Activated CD4-positive, alpha-beta memory T cell treated with anti-CD3 and anti-CD28 coated beads for 36 hours (primary cell): ENCODE measurements at regions of chr15 and their contacts with region 1.

Region 1: DNA sequence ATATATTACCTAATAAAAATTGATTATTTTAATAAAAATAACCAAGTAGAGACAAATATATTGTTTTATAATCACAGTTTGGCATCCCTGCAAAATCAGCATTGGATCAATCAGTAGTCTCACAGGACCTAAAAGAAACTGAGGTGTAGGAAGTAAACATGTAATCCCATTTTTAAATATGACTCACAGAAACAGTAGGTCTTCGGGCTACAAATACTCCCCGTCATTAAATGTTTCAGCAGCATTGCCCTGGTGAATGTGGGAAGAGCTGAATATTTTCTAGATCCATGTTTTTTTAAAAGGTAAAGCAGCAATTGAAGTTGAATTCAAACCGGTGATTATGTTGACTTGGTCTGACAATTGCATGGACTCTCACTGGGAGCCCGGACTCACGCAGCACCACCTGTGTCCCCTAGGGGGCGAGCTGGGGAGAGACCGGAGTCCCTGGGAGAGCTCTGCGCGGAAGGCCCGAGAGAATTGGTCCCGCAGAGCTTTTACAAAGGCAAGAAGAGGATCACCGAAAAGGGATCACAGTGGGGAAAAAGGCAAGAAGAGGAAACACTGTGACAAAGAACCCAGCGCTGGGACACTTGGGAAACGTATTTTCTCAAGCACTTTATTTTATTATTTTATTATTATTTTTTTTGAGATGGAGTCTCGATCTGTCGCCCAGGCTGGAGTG is 17.2 kb upstream of the USP3 start:
- DNase-seq: peak; percentile 93
- H3K4me3 Mint-ChIP-seq: peak overlapping the region; percentile 56
- H3K27ac Mint-ChIP-seq: peak overlapping the region; percentile 49
- H3K4me1 Mint-ChIP-seq: peaks cover 62% of the 10 kb centered on the region
- H3K27me3 Mint-ChIP-seq: no peaks in the 10 kb centered on the region

Region 2: DNA sequence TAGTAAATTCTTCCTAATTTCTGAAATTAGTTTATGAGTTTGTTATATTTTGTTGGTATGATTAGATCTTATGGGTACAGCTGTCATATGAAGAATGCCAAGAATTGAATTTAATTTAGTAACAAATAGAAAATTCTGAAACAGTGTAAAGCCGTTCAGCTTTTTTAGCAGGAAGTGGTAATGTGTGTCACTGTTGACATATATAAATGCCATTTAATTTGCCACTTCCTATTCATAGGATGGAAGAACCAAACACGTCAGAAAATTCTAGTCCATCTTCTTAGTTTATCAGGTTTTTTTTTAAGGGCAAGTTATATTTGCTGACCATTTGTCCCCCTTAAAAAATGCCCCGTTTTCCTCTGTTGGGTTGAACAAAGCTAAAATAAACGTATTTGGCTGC is 254.8 kb before region 1 on chr15:
- CTCF ChIA-PET with region 1: no interaction called
- POLR2A ChIA-PET with region 1: no interaction called
- intact Hi-C with region 1: no loop called
- DNase-seq: no peak
- H3K4me3 Mint-ChIP-seq: no peak overlapping the region
- H3K27ac Mint-ChIP-seq: peak overlapping the region; percentile 79
- H3K4me1 Mint-ChIP-seq: peaks cover 75% of the 10 kb centered on the region
- H3K27me3 Mint-ChIP-seq: no peaks in the 10 kb centered on the region

Region 3: DNA sequence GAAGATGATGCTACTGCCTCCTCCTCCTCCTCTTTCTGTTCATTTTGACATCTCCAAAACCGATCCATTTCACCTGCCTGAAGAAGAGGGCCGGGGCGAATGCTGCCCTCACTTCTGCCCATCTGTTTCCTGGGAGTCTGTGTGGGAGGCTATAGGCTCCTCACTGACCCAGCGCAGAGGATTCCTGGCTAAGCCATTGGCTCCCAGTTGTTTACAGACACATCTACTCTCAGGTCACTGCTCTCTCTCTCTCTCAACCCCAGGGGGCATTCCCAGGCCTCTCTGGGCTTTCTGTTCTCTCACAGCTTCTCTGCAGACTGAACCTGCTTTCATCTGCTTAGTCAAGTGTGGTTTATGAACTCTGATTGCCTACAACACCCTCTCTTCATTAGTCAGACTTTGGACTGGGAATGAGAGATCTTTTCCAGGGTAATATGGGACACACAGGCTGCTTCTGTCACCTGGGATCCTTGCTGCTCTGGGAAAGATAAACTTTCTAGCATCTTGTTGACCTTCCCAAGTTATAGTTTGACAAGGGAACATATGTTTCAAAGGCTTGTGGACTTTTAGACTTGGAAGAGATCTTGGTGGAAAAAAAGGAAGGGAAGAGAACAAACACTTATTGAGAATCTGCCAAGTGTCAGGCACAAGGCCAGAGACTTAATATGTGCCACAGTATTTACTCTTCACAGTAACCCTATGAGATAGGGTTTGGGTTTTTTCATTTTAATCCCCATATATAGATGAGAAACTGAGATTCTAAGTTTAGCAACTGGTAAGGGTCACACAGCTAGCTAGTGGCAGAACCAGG is 13.0 kb before region 1 on chr15:
- CTCF ChIA-PET with region 1: interaction called, 12 read pairs
- POLR2A ChIA-PET with region 1: interaction called, 3 read pairs
- intact Hi-C with region 1: no loop called
- DNase-seq: peak; percentile 84
- H3K4me3 Mint-ChIP-seq: peak overlapping the region; percentile 43
- H3K27ac Mint-ChIP-seq: peak overlapping the region; percentile 72
- H3K4me1 Mint-ChIP-seq: peaks cover 55% of the 10 kb centered on the region
- H3K27me3 Mint-ChIP-seq: no peaks in the 10 kb centered on the region

Region 4: GRCh38 chr15:63497642-63498467 is 10.6 kb after region 1 on chr15:
- CTCF ChIA-PET with region 1: interaction called, 76 read pairs
- POLR2A ChIA-PET with region 1: interaction called, 42 read pairs
- intact Hi-C with region 1: loop called (anchors 1 kb)
- DNase-seq: peak; percentile 77
- H3K4me3 Mint-ChIP-seq: no peak overlapping the region
- H3K27ac Mint-ChIP-seq: no peak overlapping the region
- H3K4me1 Mint-ChIP-seq: peaks cover 80% of the 10 kb centered on the region
- H3K27me3 Mint-ChIP-seq: no peaks in the 10 kb centered on the region

Region 5: GRCh38 chr15:63514531-63514943 is 27.3 kb after region 1 on chr15:
- CTCF ChIA-PET with region 1: interaction called, 14 read pairs
- POLR2A ChIA-PET with region 1: interaction called, 7 read pairs
- intact Hi-C with region 1: no loop called
- DNase-seq: no peak
- H3K4me3 Mint-ChIP-seq: peak overlapping the region; percentile 6
- H3K27ac Mint-ChIP-seq: peak overlapping the region; percentile 72
- H3K4me1 Mint-ChIP-seq: peaks cover 87% of the 10 kb centered on the region
- H3K27me3 Mint-ChIP-seq: no peaks in the 10 kb centered on the region

Region 6: GRCh38 chr15:63539521-63539920 is 52.3 kb after region 1 on chr15:
- CTCF ChIA-PET with region 1: interaction called, 11 read pairs
- POLR2A ChIA-PET with region 1: no interaction called
- intact Hi-C with region 1: no loop called
- DNase-seq: no peak
- H3K4me3 Mint-ChIP-seq: no peak overlapping the region
- H3K27ac Mint-ChIP-seq: no peak overlapping the region
- H3K4me1 Mint-ChIP-seq: peaks cover 56% of the 10 kb centered on the region
- H3K27me3 Mint-ChIP-seq: no peaks in the 10 kb centered on the region

Region 7: GRCh38 chr15:63553388-63553791 is 66.2 kb after region 1 on chr15:
- CTCF ChIA-PET with region 1: interaction called, 13 read pairs
- POLR2A ChIA-PET with region 1: no interaction called
- intact Hi-C with region 1: no loop called
- DNase-seq: no peak
- H3K4me3 Mint-ChIP-seq: no peak overlapping the region
- H3K27ac Mint-ChIP-seq: peak overlapping the region; percentile 28
- H3K4me1 Mint-ChIP-seq: peaks cover 57% of the 10 kb centered on the region
- H3K27me3 Mint-ChIP-seq: no peaks in the 10 kb centered on the region

Region 8: GRCh38 chr15:63600616-63601025 is 113.4 kb after region 1 on chr15:
- CTCF ChIA-PET with region 1: interaction called, 21 read pairs
- POLR2A ChIA-PET with region 1: interaction called, 3 read pairs
- intact Hi-C with region 1: no loop called
- DNase-seq: peak; percentile 93
- H3K4me3 Mint-ChIP-seq: peak overlapping the region; percentile 93
- H3K27ac Mint-ChIP-seq: peak overlapping the region; percentile 96
- H3K4me1 Mint-ChIP-seq: peaks cover 54% of the 10 kb centered on the region
- H3K27me3 Mint-ChIP-seq: no peaks in the 10 kb centered on the region

Region 9: GRCh38 chr15:63626955-63627354 is 139.7 kb after region 1 on chr15:
- CTCF ChIA-PET with region 1: no interaction called
- POLR2A ChIA-PET with region 1: no interaction called
- intact Hi-C with region 1: no loop called
- DNase-seq: no peak
- H3K4me3 Mint-ChIP-seq: no peak overlapping the region
- H3K27ac Mint-ChIP-seq: peak overlapping the region; percentile 18
- H3K4me1 Mint-ChIP-seq: no peaks in the 10 kb centered on the region
- H3K27me3 Mint-ChIP-seq: no peaks in the 10 kb centered on the region

Region 10: GRCh38 chr15:63922261-63922904 is 435.2 kb after region 1 on chr15:
- CTCF ChIA-PET with region 1: no interaction called
- POLR2A ChIA-PET with region 1: no interaction called
- intact Hi-C with region 1: no loop called
- DNase-seq: no peak
- H3K4me3 Mint-ChIP-seq: no peak overlapping the region
- H3K27ac Mint-ChIP-seq: no peak overlapping the region
- H3K4me1 Mint-ChIP-seq: peaks cover 14% of the 10 kb centered on the region
- H3K27me3 Mint-ChIP-seq: no peaks in the 10 kb centered on the region